ENCODE measurements at regions of chr1 and their contacts with region 1.

Region 1: DNA sequence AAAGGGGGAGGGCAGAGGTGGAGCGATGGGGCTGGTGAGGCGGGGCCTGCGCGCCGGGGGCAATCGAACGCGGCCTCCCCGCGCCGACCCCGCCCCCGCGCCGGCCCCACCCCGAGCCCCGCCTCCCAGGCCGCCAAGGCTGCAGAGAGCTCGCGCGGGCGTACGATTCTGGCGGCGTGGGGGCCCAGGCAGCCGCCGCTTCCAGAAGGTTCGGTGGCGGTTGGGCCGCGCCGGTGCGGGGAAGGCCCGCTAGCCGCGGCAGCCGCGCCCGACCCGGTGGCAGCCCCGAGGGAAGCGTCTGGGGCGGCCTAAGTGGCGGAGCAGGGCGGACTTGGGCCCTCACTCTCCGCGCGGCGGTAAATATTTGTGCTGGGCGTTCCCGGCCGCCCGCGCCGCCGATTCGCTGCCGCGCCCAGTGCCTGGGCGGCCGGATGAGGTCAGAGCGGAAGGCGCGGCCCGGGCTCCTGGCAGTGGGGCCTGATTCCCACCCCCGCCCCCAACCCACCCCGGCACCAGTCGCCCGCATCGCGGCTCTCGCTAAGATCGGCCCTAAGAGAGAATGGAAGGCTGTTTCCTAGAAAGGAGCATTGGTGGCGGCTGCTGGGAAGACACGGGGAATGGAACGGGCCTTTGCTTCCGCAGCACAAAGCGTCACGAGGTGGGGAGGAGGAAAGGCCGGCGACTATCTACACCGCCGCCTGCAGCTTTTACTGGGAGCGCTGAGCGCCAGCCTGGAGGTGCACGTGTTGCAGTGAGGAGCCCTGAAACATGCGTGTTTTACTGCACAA is at the start of gene ACOT7:
- DNase-seq: peak; percentile 79 to 94 (median 89)
- ATAC-seq: peak; percentile 93
- H3K4me3 ChIP-seq: peak within 1 kb of the TSS; percentile 33 to 62
- H3K4me3 Mint-ChIP-seq: peak within 1 kb of the TSS; percentile 88
- H3K27ac ChIP-seq: peak within 1 kb of the TSS; percentile 54 to 88
- H3K27ac Mint-ChIP-seq: peak within 1 kb of the TSS; percentile 90
- H3K4me1 ChIP-seq: peaks cover 15% of the 10 kb centered on the region
- H3K4me1 Mint-ChIP-seq: peaks cover 24% of the 10 kb centered on the region
- H3K27me3 ChIP-seq: no peaks in the 10 kb centered on the region
- H3K27me3 Mint-ChIP-seq: no peaks in the 10 kb centered on the region
- CTCF ChIP-seq: no peak
- total RNA-seq, gene ACOT7: 2.8 to 3.1 TPM

Region 2: DNA sequence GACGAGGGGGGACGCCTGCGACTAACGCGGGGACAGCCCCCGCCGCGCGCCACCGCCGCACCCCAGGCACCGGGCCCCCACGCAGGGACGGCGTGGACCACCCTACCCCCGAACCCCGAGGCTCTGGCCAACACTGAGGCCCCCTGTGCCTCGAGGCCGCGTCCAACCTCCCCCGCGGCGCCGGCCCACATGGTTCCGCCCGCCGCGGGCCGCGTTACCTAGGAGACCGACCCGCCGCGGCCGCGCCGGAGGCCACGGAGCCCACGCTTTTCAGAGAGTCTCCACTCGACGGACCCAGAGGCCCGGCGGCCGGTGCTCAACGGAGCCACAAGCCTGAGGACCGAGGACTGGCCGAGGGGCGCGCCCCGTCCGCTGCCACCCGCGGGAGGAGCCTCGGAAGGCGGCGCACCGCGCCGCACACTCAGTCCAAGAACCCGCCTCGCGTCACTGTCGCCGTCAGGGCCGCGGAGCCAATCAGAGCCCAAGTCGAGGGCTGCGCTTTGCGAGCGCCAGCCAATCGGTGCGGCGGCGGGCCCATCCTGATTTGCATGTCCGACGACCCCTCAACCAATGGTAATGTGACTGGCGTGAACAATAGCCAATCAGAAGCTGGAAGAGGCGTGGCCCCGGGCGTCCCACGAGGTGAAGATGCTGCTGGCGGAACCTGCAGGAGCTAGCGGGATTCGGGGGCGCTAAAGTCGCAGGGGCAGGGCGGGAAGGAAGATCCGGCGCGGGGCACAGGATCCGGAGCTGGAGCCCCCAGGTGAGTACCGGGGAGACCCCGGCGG is 401.4 kb before region 1 on chr1 and contains the start of gene NPHP4:
- CTCF ChIA-PET with region 1: no interaction called
- POLR2A ChIA-PET with region 1: no interaction called
- intact Hi-C with region 1: loop called in 1 of 2 experiments (anchors 1 kb)
- DNase-seq: peak; percentile 98 to 100 (median 99)
- ATAC-seq: peak; percentile 86
- H3K4me3 ChIP-seq: peak within 1 kb of the TSS; percentile 64 to 87
- H3K4me3 Mint-ChIP-seq: peak within 1 kb of the TSS; percentile 96
- H3K27ac ChIP-seq: peak within 1 kb of the TSS; percentile 90 to 99
- H3K27ac Mint-ChIP-seq: peak within 1 kb of the TSS; percentile 93
- H3K4me1 ChIP-seq: peaks cover 35% of the 10 kb centered on the region
- H3K4me1 Mint-ChIP-seq: peaks cover 33% of the 10 kb centered on the region
- H3K27me3 ChIP-seq: no peaks in the 10 kb centered on the region
- H3K27me3 Mint-ChIP-seq: no peaks in the 10 kb centered on the region
- CTCF ChIP-seq: no peak
- total RNA-seq, gene NPHP4: 3.1 to 3.7 TPM

Region 3: DNA sequence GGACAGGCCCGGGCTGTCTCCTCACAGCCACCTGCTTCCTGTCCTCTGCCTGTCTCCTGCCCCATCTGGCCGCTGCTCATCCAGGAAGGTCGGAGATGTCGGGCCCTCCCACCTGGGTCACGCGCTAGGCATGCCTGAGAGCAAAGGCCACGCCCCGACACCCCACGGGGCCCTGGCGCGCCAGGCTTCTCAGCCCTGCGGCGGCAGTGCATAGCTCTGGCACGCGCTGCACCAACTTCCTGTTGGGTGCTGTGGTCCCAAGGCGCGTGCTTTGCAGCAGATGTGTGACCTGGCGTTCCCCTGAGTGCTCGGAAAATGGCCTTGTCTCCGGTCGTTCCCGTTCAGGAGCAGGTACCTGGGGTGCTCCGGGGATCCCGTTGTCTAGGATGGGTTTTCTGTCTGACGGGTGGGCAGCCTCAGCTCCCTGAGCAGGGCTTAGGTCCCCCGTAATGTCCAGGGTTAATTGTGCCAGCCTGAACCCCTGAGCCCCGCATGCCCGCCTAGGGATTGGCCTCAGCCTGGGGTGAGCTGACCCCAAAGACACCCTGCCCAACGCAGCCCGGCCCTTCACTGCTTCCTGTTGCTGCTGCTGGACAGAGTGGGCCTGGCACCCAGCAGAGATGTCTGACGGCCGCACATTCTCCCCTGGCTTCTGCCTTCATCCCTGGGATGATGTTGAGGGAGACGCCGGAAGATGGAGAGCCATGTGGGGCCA is 367.3 kb before region 1 on chr1:
- CTCF ChIA-PET with region 1: no interaction called
- POLR2A ChIA-PET with region 1: no interaction called
- intact Hi-C with region 1: loop called in 1 of 2 experiments (anchors 2 kb)
- DNase-seq: peak; percentile 87 to 98 (median 94)
- ATAC-seq: peak; percentile 73
- H3K4me3 ChIP-seq: peak overlapping the region; percentile 76 to 93
- H3K4me3 Mint-ChIP-seq: peak overlapping the region; percentile 90
- H3K27ac ChIP-seq: peak overlapping the region; percentile 85 to 94
- H3K27ac Mint-ChIP-seq: peak overlapping the region; percentile 99
- H3K4me1 ChIP-seq: peaks cover 54% of the 10 kb centered on the region
- H3K4me1 Mint-ChIP-seq: peaks cover 55% of the 10 kb centered on the region
- H3K27me3 ChIP-seq: no peaks in the 10 kb centered on the region
- H3K27me3 Mint-ChIP-seq: no peaks in the 10 kb centered on the region
- CTCF ChIP-seq: no peak

Region 4: DNA sequence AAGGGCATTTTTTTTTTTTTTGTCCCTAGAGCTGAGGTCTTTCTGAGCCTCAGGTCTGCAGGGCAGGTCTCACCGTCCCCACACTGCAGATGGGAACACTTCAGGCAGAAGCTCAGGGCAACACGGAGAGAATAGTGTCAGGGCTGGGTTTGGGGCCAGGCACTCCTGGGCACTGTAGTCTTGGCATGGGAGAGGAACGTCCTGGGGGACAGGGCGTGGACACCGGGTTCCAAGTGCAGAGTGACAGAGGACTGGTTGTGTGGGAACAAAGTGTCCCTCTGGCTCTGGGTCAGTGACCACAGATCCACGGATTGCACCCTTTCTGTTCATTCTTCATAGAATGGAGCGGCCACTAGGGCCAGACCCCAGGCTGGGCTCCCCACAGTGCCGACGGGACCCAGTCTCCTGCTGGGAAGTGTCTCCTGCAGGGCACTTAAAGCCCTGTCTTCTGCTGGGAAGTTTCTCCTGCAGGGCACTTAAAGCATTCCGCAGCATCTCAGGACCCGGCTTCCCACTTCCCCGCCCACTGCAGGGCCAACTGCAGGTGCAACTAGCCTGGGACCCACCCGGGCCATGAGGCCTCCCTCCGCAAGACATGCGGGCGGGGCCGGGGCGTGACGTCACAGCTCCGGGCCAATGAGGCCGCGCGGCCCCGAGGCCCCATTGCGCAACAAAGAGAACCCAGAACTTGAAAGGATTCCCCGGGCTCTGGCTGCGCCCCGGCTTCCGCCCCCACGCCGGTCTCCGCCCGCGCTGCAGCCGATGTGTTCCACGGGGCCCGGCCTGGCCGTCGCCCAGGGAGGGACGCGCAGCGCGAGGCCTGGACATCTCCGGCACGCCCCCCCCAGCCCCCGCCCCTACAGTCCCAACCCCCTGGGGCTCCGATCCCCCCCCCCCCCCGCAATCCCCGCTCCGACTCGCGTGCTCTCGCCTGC is 133.8 kb before region 1 on chr1:
- CTCF ChIA-PET with region 1: no interaction called
- POLR2A ChIA-PET with region 1: no interaction called
- intact Hi-C with region 1: loop called in 1 of 2 experiments (anchors 2 kb)
- DNase-seq: peak; percentile 58 to 90 (median 81)
- ATAC-seq: peak; percentile 79
- H3K4me3 ChIP-seq: peak overlapping the region; percentile 41 to 45
- H3K4me3 Mint-ChIP-seq: peak overlapping the region; percentile 66
- H3K27ac ChIP-seq: no peak overlapping the region
- H3K27ac Mint-ChIP-seq: no peak overlapping the region
- H3K4me1 ChIP-seq: peaks cover 7% of the 10 kb centered on the region
- H3K4me1 Mint-ChIP-seq: peaks cover 11% of the 10 kb centered on the region
- H3K27me3 ChIP-seq: no peaks in the 10 kb centered on the region
- H3K27me3 Mint-ChIP-seq: peaks cover 7% of the 10 kb centered on the region
- CTCF ChIP-seq: no peak

Region 5: GRCh38 chr1:6343506-6344405 is 49.8 kb before region 1 on chr1:
- CTCF ChIA-PET with region 1: interaction called, 82 read pairs
- POLR2A ChIA-PET with region 1: interaction called, 12 read pairs
- intact Hi-C with region 1: loop called in 1 of 2 experiments (anchors 1 kb)
- DNase-seq: peak; percentile 22 to 73 (median 61)
- ATAC-seq: peak; percentile 63
- H3K4me3 ChIP-seq: no peak overlapping the region
- H3K4me3 Mint-ChIP-seq: no peak overlapping the region
- H3K27ac ChIP-seq: no peak overlapping the region
- H3K27ac Mint-ChIP-seq: no peak overlapping the region
- H3K4me1 ChIP-seq: peaks cover 13% of the 10 kb centered on the region
- H3K4me1 Mint-ChIP-seq: peaks cover 10% of the 10 kb centered on the region
- H3K27me3 ChIP-seq: no peaks in the 10 kb centered on the region
- H3K27me3 Mint-ChIP-seq: no peaks in the 10 kb centered on the region
- CTCF ChIP-seq: peak; percentile 52

Region 6: DNA sequence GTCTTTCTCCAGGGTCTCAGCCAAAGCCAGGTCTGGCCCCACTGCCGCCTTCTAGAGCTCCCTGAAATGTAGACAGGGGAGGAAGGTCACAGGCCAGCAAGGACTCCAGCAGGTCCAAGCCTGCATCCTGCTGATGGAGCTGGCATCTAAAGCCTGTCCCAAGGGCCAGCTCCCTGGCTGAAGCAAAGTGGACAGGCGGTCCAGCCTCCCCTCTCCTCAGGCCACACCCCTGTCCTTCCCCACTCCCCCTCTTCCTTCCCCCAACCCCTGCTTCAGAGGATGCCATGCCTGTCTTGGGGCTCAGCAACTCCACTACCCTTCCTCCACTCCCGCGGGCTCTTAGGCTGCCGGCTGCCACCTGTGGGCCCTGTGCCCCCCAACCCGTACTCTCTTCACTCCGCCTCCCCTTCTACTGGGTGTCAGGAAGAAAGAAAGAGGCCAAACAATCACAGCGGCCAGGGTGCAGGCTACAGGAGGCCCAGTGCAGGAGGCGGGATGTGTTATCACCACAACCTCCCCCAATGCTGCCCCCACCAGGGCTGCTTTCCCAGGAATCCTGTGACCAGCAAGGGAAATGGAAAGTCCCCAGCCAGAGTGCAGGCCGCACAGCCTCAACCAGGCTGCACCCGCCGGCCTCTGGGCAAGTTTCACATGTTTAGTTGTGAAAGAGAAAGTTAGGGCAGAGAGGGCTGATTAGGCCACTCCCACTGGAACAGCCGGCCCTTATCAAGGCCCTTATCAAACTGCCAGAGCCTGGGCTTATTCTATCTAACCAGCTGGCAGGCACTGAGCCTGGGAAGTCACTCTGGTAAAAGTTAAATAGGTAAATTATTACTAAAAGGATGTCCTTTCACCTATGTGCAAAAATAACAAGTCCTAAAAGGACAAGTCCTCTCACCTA is 34.1 kb before region 1 on chr1:
- CTCF ChIA-PET with region 1: interaction called, 16 read pairs
- POLR2A ChIA-PET with region 1: interaction called, 17 read pairs
- intact Hi-C with region 1: loop called in 1 of 2 experiments (anchors 2 kb)
- DNase-seq: peak in 7 of 9 experiments; percentile 34 to 80 (median 63)
- ATAC-seq: peak; percentile 69
- H3K4me3 ChIP-seq: peak overlapping the region; percentile 23 to 51
- H3K4me3 Mint-ChIP-seq: peak overlapping the region; percentile 69
- H3K27ac ChIP-seq: peak overlapping the region; percentile 49 to 80
- H3K27ac Mint-ChIP-seq: peak overlapping the region; percentile 85
- H3K4me1 ChIP-seq: peaks cover 41% of the 10 kb centered on the region
- H3K4me1 Mint-ChIP-seq: peaks cover 37% of the 10 kb centered on the region
- H3K27me3 ChIP-seq: no peaks in the 10 kb centered on the region
- H3K27me3 Mint-ChIP-seq: no peaks in the 10 kb centered on the region
- CTCF ChIP-seq: no peak

Region 7: GRCh38 chr1:6464514-6464836 is 70.9 kb after region 1 on chr1:
- CTCF ChIA-PET with region 1: no interaction called
- POLR2A ChIA-PET with region 1: interaction called, 3 read pairs
- intact Hi-C with region 1: loop called in 1 of 2 experiments (anchors 1 kb)
- DNase-seq: peak in 2 of 9 experiments; percentile 38 to 44
- ATAC-seq: no peak
- H3K4me3 ChIP-seq: peak overlapping the region; percentile 88 to 95
- H3K4me3 Mint-ChIP-seq: peak overlapping the region; percentile 91
- H3K27ac ChIP-seq: peak overlapping the region; percentile 72 to 87
- H3K27ac Mint-ChIP-seq: peak overlapping the region; percentile 95
- H3K4me1 ChIP-seq: peaks cover 52% of the 10 kb centered on the region
- H3K4me1 Mint-ChIP-seq: peaks cover 44% of the 10 kb centered on the region
- H3K27me3 ChIP-seq: no peaks in the 10 kb centered on the region
- H3K27me3 Mint-ChIP-seq: no peaks in the 10 kb centered on the region
- CTCF ChIP-seq: no peak

Region 8: DNA sequence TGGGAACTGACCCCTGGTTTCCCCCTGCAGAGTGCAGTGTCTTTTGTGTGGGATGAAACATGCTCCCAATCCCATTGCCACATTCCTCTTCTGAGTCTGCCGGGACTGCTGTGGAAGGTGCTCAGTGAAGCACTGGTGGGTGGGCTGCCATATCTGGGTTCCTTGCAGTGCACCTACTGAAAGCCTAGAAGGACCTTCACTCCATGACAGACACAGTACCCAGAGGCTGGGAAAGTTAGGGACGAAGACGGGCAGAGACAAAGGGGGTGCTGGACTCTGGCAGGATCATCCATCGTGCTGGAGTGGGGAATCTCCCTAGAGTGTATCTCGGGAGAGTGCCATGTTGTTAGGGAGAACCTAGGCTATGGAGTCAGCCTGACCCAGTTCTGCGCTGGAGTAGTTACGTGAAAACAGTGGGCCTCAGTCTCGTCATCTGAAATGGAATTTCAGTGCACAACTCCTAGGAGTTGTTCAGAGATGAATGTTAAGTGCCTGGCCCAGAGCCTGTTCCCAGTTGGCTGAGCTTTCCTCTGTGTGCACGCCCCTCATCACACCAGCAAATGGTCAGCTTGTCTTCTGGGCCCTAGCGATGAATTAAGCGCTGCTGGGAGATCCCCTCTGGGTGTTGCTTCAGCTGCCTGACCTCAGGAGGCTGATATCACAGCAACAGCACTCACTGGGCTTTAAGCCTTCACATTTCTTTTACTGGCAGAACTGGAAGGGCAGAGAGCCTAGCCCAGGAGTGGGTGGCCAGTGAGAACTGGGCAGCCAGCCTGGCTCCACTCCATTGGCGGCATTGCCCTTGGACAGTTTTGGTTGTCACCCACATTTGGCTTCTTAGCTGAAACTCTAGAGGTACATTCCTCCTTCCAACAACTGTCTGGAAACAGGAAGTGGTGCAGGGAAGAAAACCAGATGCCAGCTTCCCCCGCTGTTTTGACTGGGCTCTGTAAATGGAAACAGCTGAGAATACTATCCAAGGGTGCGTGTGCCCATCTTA is 897.7 kb after region 1 on chr1:
- CTCF ChIA-PET with region 1: no interaction called
- POLR2A ChIA-PET with region 1: no interaction called
- intact Hi-C with region 1: no loop called
- DNase-seq: no peak
- ATAC-seq: no peak
- H3K4me3 ChIP-seq: no peak overlapping the region
- H3K4me3 Mint-ChIP-seq: no peak overlapping the region
- H3K27ac ChIP-seq: no peak overlapping the region
- H3K27ac Mint-ChIP-seq: no peak overlapping the region
- H3K4me1 ChIP-seq: no peaks in the 10 kb centered on the region
- H3K4me1 Mint-ChIP-seq: no peaks in the 10 kb centered on the region
- H3K27me3 ChIP-seq: no peaks in the 10 kb centered on the region
- H3K27me3 Mint-ChIP-seq: peaks cover 3% of the 10 kb centered on the region
- CTCF ChIP-seq: no peak